Breast epithelium (tissue), 4 donors: ENCODE measurements at regions of chr16 and their contacts with region 1.

Region 1: DNA sequence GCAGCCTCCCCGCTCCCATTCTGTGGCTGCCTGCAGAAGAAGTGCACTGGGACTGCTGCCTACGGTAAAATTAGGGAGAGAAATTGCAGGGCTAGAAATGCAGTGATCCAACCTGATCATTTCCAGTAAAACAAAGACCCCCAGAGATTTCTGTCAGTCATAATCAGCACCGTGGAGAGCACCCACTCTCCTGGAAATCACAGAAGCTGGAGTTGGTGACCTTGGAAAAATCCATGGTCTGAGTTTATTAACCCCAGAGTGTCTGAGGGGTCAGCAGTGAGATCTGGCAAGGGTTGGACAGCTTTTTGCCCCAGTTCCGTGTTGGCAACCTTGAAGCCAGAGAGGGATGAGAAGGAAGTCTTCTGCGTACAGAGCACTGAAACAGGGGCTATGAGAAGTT is 7.8 kb downstream of the SYCE1L start:
- DNase-seq: no peak
- H3K4me3 ChIP-seq: no peak overlapping the region
- H3K27ac ChIP-seq: no peak overlapping the region
- H3K4me1 ChIP-seq: no peaks in the 10 kb centered on the region
- H3K27me3 ChIP-seq: no peaks in the 10 kb centered on the region
- CTCF ChIP-seq: no peak
- POLR2A ChIP-seq: no peak

Region 2: DNA sequence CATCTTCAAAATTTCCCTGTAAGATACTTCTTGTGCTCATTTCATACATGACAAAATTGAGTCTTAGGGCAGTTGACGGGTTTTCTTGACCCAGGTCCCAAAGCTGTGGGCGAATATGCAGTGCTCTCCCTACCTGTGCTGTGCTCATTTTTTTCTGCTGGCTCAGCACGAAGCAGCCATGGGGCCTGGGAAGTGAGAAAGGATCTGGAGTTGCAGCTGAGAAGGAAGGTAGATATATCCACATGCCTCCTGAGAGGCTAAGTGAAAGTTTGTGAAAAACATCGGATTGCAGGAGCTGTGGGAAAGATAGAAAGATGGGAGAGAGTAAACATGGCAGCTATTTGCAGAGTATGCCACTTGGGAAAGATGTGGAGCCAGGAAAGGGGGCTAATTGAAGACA is 58.9 kb before region 1 on chr16:
- intact Hi-C with region 1: no loop called
- DNase-seq: no peak
- H3K4me3 ChIP-seq: no peak overlapping the region
- H3K27ac ChIP-seq: no peak overlapping the region
- H3K4me1 ChIP-seq: no peaks in the 10 kb centered on the region
- H3K27me3 ChIP-seq: no peaks in the 10 kb centered on the region
- CTCF ChIP-seq: no peak
- POLR2A ChIP-seq: no peak

Region 3: DNA sequence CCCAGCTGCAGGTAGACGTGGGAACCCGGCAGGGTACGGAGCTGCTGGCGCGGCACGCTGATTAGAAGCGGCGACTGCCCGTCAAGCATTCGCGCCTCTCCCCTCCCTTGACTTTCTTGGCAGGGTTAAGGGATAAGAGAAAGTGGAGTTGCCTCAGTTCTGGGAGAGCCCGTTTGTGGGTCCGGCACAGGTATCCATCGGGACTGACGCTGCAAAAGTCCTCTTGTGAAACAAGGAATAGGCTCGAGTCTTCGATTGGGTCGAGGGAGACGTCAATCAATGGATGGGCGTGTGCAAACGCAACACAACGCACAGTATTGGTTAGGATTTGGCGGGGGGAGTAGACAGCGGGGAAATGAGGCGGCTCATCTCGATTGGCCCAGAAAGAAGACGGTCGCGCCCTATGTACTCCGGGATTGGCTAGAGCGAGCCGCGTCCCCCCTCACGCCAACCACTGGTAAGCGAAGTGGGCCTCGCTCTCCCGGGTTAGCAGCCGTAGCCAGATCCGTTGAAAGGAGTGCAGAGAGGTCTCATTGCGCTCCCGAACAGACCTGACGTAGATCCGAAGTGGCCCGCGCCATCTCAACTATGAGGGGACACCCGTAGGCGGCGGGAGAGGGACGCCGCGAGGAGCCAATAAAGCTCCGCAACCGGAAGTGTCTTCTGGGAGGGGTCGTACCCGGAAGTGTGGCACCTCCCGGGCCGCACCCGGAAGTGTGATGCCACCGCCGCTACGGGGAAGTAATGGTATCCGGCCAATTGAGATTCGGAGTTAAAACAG is 16.4 kb before region 1 on chr16 and contains the start of gene MON1B:
- intact Hi-C with region 1: loop called (anchors 2 kb)
- DNase-seq: peak; percentile 97 to 99
- H3K4me3 ChIP-seq: peak within 1 kb of the TSS; percentile 66 to 87 (median 77)
- H3K27ac ChIP-seq: peak within 1 kb of the TSS; percentile 96
- H3K4me1 ChIP-seq: peaks cover 0 to 9% of the 10 kb centered on the region in 2 donors
- H3K27me3 ChIP-seq: no peaks in the 10 kb centered on the region
- CTCF ChIP-seq: peak in 2 of 3 donors; percentile 21 to 25
- POLR2A ChIP-seq: peak; percentile 48
- total RNA-seq, gene MON1B: 21.6 to 26.6 (median 22.5) TPM

Region 4: DNA sequence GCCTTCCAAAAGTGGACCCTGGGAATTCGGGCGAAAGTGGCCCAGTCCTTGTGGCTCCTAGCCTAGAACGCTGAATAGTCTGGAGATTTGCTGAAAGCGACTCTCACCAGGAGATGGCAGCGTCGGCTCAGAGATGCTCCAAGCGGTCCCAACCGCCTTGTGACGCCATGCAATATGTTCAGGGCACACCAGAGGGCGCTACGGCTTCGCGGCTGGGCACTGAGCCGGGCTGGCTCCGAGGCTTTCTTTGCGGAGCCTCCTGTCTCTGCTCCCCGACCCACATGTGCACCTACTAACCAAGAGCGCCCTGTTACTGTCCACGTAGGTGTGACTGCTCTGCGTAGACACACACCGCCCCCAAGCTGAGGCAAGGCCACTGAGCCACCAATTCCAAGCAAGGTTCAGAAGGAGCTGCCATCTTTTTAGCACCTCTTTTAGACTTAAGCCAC is 29.1 kb after region 1 on chr16:
- intact Hi-C with region 1: no loop called
- DNase-seq: peak; percentile 72 to 90
- H3K4me3 ChIP-seq: peak overlapping the region in 1 of 3 donors; percentile 46
- H3K27ac ChIP-seq: no peak overlapping the region
- H3K4me1 ChIP-seq: no peaks in the 10 kb centered on the region
- H3K27me3 ChIP-seq: peaks cover 0 to 3% of the 10 kb centered on the region in 2 donors
- CTCF ChIP-seq: peak; percentile 97 to 100 (median 100)
- POLR2A ChIP-seq: no peak

Region 5: DNA sequence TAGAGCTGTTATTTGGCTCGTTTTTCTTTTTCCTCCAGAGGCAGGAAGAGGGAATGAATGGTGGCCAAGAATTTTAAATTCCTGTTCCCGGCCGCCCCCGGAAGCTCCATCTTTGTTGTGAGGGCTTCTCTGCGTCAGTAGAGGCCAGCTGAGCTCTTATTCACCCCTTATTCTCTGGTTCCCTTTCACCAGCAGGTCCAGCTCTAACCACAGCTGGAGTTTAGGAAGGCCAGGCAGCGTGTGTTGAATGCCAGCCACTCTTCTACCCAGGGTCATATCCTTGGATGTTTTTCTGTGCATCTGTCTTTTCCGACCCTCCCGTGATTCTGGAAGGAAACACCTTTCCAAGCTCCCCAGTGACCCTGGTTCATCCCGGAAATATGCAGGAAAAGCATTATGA is 1463.0 kb after region 1 on chr16:
- intact Hi-C with region 1: no loop called
- DNase-seq: peak in 1 of 2 donors; percentile 28
- H3K4me3 ChIP-seq: no peak overlapping the region
- H3K27ac ChIP-seq: peak overlapping the region; percentile 60 to 73
- H3K4me1 ChIP-seq: no peaks in the 10 kb centered on the region
- H3K27me3 ChIP-seq: no peaks in the 10 kb centered on the region
- CTCF ChIP-seq: no peak
- POLR2A ChIP-seq: no peak